ENCODE measurements at regions of chr4 and their contacts with region 1.

Region 1: DNA sequence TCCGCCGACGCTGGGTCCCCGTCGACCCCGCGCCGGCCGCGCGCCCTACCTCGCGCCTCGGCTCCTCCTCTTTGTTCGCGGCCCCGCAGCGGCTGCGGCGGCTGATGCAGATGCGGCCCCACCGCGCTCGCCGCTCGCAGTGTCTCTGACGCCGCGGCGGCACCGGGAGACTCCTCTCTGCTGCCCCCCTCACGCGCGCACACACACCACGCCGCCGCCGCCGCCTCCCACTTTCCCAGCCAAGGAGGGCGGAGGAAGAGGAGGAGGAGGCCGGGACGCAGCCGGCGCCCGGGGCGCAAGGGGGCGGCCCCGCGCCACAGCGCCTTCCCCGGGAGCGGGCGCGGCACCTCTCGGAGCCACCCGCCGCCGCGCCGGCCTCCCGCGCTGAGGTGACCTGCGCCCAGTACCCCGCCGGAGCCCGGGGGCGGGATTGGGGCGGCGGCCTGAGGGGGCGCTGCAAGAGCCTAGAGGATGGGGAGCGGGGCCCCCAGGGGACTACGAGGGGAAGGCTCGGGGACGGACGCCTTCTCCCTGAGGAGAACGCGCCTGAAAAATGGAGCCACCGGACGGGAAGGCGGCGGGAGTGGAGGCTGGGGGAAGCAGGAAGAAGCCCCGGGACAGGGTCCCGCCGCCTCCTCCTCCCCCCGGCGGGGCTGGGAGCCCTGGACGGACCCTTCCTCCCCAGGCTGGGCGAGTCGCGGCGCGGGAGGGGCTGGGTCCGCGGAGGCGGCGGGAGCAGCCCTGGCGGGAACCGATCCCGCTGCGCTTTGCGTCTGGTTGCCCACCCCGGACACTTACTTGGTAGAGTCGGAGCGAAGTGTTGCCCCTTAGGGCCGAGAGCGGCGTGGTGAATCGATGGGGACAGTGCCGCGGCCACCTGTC is at the start of gene SH3RF1:
- DNase-seq: peak; percentile 92 to 96
- ATAC-seq: peak; percentile 96
- H3K4me3 ChIP-seq: peak within 1 kb of the TSS; percentile 83 to 98
- H3K27ac ChIP-seq: peak within 1 kb of the TSS; percentile 91 to 97
- H3K4me1 ChIP-seq: peaks cover 0 to 8% of the 10 kb centered on the region in 2 donors
- H3K27me3 ChIP-seq: no peaks in the 10 kb centered on the region
- total RNA-seq, gene SH3RF1: 27.3 to 31.8 TPM

Region 2: GRCh38 chr4:169010125-169011023 is 260.7 kb before region 1 on chr4 and contains the start of gene CBR4:
- intact Hi-C with region 1: loop called (anchors 5 kb)
- DNase-seq: peak; percentile 99
- ATAC-seq: peak; percentile 98
- H3K4me3 ChIP-seq: peak within 1 kb of the TSS; percentile 83 to 85
- H3K27ac ChIP-seq: peak within 1 kb of the TSS in 1 of 2 donors; percentile 77
- H3K4me1 ChIP-seq: peaks cover 0 to 3% of the 10 kb centered on the region in 2 donors
- H3K27me3 ChIP-seq: no peaks in the 10 kb centered on the region
- total RNA-seq, gene CBR4: 13.6 to 20.5 TPM

Region 3: GRCh38 chr4:169059306-169060211 is 211.5 kb before region 1 on chr4:
- intact Hi-C with region 1: loop called in 1 of 2 experiments (anchors 5 kb)
- DNase-seq: peak in 1 of 2 donors; percentile 51
- ATAC-seq: peak; percentile 66
- H3K4me3 ChIP-seq: no peak overlapping the region
- H3K27ac ChIP-seq: peak overlapping the region; percentile 54 to 94
- H3K4me1 ChIP-seq: peaks cover 3 to 10% of the 10 kb centered on the region in 2 donors
- H3K27me3 ChIP-seq: no peaks in the 10 kb centered on the region

Region 4: GRCh38 chr4:169115897-169116254 is 155.2 kb before region 1 on chr4:
- intact Hi-C with region 1: loop called in 1 of 2 experiments (anchors 5 kb)
- DNase-seq: no peak
- ATAC-seq: peak; percentile 25
- H3K4me3 ChIP-seq: no peak overlapping the region
- H3K27ac ChIP-seq: peak overlapping the region in 1 of 2 donors; percentile 11
- H3K4me1 ChIP-seq: peaks cover 2 to 11% of the 10 kb centered on the region in 2 donors
- H3K27me3 ChIP-seq: no peaks in the 10 kb centered on the region

Region 5: GRCh38 chr4:169133932-169134331 is 137.1 kb before region 1 on chr4:
- intact Hi-C with region 1: loop called in 1 of 2 experiments (anchors 10 kb)
- DNase-seq: no peak
- ATAC-seq: peak; percentile 73
- H3K4me3 ChIP-seq: no peak overlapping the region
- H3K27ac ChIP-seq: peak overlapping the region in 1 of 2 donors; percentile 92
- H3K4me1 ChIP-seq: peaks cover 4 to 14% of the 10 kb centered on the region in 2 donors
- H3K27me3 ChIP-seq: no peaks in the 10 kb centered on the region

Region 6: DNA sequence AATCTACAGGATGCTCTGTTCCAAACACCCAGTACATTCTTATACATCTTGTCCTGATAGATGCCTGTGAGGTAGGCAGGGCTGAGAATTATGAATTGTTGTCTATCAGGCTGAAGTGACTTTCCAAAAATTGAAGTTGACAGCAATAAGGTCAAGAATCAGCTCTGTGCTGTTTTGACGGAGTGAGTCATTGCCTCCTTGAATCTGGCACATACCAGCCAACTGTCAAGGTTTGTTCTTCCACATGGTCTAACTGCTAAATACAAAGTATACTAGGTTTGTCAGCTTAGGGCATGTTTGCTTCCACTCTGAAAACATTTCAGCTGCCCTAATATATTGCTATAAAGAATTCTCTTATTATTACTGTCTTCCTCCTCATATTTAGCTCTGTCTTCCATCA is 32.6 kb before region 1 on chr4:
- intact Hi-C with region 1: loop called in 1 of 2 experiments (anchors 5 kb)
- DNase-seq: no peak
- ATAC-seq: peak; percentile 73
- H3K4me3 ChIP-seq: no peak overlapping the region
- H3K27ac ChIP-seq: peak overlapping the region in 1 of 2 donors; percentile 42
- H3K4me1 ChIP-seq: peaks cover 7 to 20% of the 10 kb centered on the region in 2 donors
- H3K27me3 ChIP-seq: no peaks in the 10 kb centered on the region

Region 7: GRCh38 chr4:169619959-169620879 is 349.2 kb after region 1 on chr4 and contains the start of gene CLCN3:
- intact Hi-C with region 1: no loop called
- DNase-seq: peak; percentile 99 to 100
- ATAC-seq: peak; percentile 100
- H3K4me3 ChIP-seq: peak within 1 kb of the TSS; percentile 73 to 89
- H3K27ac ChIP-seq: peak within 1 kb of the TSS; percentile 14 to 79
- H3K4me1 ChIP-seq: peaks cover 0 to 2% of the 10 kb centered on the region in 2 donors
- H3K27me3 ChIP-seq: no peaks in the 10 kb centered on the region
- total RNA-seq, gene CLCN3: 19.1 to 29.1 TPM